Lower leg skin (tissue), 4 donors: ENCODE measurements at regions of chr21 and their contacts with region 1.

Region 1: DNA sequence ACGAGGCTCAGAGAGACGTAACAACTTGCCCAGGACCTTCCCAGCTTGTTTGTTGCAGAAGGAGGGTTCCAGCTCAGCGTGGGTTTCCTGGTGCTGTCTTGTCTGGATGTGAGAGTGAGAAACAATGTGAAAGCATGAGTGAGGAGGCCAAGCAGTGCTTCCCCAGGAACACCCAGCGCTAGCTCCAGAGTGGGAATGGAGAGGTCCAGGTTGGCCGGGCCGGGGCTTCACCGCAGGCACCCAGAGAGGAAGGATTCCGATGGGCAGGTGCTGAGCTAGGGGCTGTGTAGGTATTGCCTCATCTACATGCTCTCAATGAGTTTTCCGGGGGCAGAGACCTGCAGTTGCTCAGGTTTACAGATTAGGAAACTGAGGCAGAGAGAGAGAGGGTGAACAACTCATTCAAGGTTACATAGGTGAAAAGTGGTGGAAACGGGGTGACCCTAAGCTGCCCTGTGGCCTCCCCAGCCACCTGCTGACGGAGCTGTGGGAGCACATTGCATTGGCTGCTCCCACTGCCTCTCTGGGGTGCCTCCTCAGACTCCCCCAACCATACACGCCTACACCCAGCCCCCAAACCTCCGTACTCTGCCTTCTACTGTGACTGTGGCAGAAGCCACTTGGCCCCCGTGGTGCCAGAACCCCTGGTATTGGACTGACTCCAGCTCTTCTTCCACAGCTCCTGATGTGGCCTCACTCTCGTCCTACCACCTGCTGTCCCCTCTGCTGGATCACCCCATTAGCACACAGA is 51.2 kb downstream of the B3GALT5 start:
- DNase-seq: peak in 1 of 2 donors; percentile 78
- H3K4me3 ChIP-seq: no peak overlapping the region
- CTCF ChIP-seq: no peak
- POLR2A ChIP-seq: no peak

Region 2: GRCh38 chr21:39601187-39601928 is 62.6 kb before region 1 on chr21:
- intact Hi-C with region 1: no loop called
- DNase-seq: no peak
- H3K4me3 ChIP-seq: no peak overlapping the region
- CTCF ChIP-seq: no peak
- POLR2A ChIP-seq: no peak

Region 3: GRCh38 chr21:39630827-39631226 is 33.1 kb before region 1 on chr21:
- intact Hi-C with region 1: loop called (anchors 2 kb)
- DNase-seq: no peak
- H3K4me3 ChIP-seq: no peak overlapping the region
- CTCF ChIP-seq: no peak
- POLR2A ChIP-seq: no peak